ENCODE measurements at regions of chr10 and their contacts with region 1.

Region 1: DNA sequence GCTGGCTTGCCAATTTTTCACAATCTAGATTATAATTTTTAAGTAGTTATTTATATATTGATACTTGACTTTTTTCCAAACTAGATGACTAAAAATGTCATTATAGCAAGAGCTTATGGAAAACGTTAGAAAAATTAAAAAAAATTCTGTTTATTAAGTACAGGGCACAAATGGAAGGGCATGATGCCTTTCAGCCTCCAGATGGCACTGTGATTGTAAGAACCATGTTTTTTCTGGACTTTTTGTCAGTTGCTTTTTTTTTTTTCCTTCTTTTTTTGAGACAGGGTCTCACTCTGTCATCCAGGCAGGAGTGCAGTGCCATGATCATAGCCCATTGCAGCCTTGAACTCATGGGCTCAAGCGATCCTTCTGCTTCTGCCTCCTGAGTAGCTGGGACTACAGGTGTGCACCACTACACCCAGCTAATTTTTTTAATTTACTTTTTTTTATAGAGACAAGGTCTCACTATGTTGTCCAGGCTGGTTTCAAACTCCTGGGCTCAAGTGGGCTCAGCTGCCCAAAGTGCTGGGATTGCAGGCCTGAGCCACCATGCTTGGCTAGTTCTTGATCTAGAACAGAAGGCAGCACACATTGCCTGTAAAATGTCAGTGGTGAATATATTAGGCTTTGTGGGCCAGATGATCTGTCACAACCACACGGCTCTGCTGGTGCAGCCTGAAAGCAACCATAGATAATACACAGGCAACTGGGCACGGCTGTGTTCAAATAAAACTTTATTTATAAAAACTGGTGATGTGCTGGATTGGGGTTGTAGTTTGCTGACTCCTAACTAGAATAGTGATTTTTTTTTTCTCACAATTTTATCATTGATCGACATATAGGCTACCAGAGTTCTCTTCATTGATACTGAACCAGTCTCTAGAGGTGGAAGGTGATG is 27.4 kb downstream of the UCMA start:
- DNase-seq: peak; percentile 44
- H3K4me3 ChIP-seq: peak overlapping the region in 1 of 2 experiments; percentile 31; a peak in 1 of 4 replicates
- H3K27ac ChIP-seq: no peak overlapping the region
- H3K4me1 ChIP-seq: no peaks in the 10 kb centered on the region
- H3K27me3 ChIP-seq: no peaks in the 10 kb centered on the region
- CTCF ChIP-seq: peak; percentile 70
- EP300 ChIP-seq: no peak
- RAD21 ChIP-seq: peak; percentile 74

Region 2: GRCh38 chr10:13180788-13181187 is 26.0 kb before region 1 on chr10:
- CTCF ChIA-PET with region 1: interaction called, 10 read pairs
- POLR2A ChIA-PET with region 1: interaction called, 3 read pairs
- DNase-seq: no peak
- H3K4me3 ChIP-seq: no peak overlapping the region
- H3K27ac ChIP-seq: no peak overlapping the region
- H3K4me1 ChIP-seq: no peaks in the 10 kb centered on the region
- H3K27me3 ChIP-seq: no peaks in the 10 kb centered on the region
- CTCF ChIP-seq: no peak
- EP300 ChIP-seq: no peak
- RAD21 ChIP-seq: no peak

Region 3: GRCh38 chr10:13224210-13224995 is 17.6 kb after region 1 on chr10:
- CTCF ChIA-PET with region 1: interaction called, 11 read pairs
- POLR2A ChIA-PET with region 1: no interaction called
- DNase-seq: no peak
- H3K4me3 ChIP-seq: no peak overlapping the region
- H3K27ac ChIP-seq: no peak overlapping the region
- H3K4me1 ChIP-seq: no peaks in the 10 kb centered on the region
- H3K27me3 ChIP-seq: no peaks in the 10 kb centered on the region
- CTCF ChIP-seq: no peak
- EP300 ChIP-seq: no peak
- RAD21 ChIP-seq: no peak

Region 4: DNA sequence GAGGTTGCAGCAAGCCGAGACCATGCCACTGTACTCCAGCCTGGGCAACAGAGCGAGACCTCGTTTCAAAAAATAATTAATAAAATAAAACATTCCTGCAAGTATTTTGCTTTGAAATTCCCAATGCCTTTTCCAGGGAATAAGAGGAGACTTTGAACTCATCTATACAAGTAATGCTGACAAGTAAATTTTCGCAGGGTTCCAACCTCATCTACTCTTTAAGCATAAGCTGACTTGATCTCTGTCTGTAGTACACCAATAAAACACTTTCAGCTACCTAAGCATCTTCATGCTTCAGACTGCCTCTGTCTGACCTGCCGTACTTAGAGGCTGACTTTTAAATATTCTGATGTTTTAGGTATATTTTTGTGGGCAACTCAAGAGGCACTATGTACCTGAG is 335.7 kb after region 1 on chr10:
- CTCF ChIA-PET with region 1: no interaction called
- POLR2A ChIA-PET with region 1: no interaction called
- DNase-seq: no peak
- H3K4me3 ChIP-seq: no peak overlapping the region
- H3K27ac ChIP-seq: no peak overlapping the region
- H3K4me1 ChIP-seq: no peaks in the 10 kb centered on the region
- H3K27me3 ChIP-seq: peaks cover 22% of the 10 kb centered on the region
- CTCF ChIP-seq: no peak
- EP300 ChIP-seq: no peak
- RAD21 ChIP-seq: no peak

Measured in SK-N-SH (cell line).